ENCODE measurements at regions of chr11 and their contacts with region 1.

Region 1: DNA sequence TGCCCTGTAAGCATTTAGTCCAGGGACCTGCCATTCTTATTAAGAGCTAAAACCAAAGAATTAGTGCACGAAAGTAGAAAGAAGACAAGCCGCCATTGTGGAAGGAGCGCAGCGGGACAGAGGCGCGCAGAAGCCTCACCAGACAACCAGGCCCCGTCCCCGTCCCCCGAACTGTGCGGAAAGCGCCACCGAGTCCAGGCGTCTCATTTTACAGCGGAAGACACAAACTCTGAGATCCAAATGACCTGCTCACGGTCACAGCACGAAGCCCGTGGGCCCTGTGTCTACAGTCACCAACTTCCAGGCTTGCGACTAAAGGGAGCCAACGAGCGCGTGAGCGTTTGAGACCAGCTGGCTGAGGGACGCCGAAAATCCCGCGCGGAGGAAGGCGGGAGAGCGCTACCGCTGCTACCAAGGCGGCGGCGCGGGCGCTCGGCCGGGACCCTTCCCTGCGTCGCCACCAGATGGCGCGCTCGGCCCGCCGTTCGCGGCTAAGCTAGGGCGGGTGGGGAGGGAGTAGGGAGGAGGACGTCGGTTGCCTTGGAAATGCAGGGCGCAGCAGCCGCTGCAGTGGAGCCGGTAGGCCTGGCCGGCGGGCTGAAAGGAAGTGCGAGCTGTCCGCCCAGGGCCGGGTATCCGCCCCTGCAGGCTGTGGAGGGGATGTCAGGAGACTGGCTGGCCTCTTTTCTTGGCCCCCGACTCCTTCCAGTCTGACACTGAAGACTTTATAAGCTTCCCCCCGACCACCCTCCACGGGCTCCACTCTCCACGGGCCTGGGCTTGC is 434 bp upstream of the CCDC83 start:
- DNase-seq: peak; percentile 84
- ATAC-seq: peak; percentile 100
- H3K4me3 ChIP-seq: peak overlapping the region; percentile 63 to 85 (median 73)
- H3K27ac ChIP-seq: peak overlapping the region; percentile 72
- H3K4me1 ChIP-seq: peaks cover 10% of the 10 kb centered on the region
- H3K27me3 ChIP-seq: no peaks in the 10 kb centered on the region; a peak in 1 of 5 replicates
- CTCF ChIP-seq: peak; percentile 100
- EP300 ChIP-seq: no peak
- POLR2A ChIP-seq: peak; percentile 50 to 75; a peak in 2 of 4 replicates
- RAD21 ChIP-seq: peak; percentile 100

Region 2: DNA sequence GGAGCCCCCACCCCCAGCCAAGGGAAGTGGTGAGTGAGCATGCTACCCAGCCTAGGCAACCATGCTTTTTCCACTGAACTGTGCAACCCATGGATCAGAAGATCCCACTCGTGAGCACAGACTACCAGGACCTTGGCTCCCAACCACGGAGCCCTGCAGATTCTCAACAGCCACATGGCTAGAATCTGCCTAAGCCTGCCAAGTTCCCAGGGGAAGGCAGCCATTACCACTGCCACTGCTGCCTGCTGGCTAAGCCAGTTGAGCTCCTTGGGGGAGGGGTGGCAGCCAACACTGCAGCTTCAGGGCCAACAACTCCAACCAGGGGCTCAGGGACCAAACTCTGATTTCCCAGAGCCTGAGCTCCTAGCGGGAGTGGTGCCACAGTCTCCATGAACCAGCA is 423.4 kb before region 1 on chr11:
- CTCF ChIA-PET with region 1: no interaction called
- POLR2A ChIA-PET with region 1: no interaction called
- in situ Hi-C with region 1: no loop called
- intact Hi-C with region 1: no loop called
- DNase-seq: no peak
- ATAC-seq: no peak
- H3K4me3 ChIP-seq: no peak overlapping the region
- H3K27ac ChIP-seq: no peak overlapping the region
- H3K4me1 ChIP-seq: no peaks in the 10 kb centered on the region
- H3K27me3 ChIP-seq: no peaks in the 10 kb centered on the region
- CTCF ChIP-seq: no peak
- EP300 ChIP-seq: no peak
- POLR2A ChIP-seq: no peak
- RAD21 ChIP-seq: no peak

Region 3: DNA sequence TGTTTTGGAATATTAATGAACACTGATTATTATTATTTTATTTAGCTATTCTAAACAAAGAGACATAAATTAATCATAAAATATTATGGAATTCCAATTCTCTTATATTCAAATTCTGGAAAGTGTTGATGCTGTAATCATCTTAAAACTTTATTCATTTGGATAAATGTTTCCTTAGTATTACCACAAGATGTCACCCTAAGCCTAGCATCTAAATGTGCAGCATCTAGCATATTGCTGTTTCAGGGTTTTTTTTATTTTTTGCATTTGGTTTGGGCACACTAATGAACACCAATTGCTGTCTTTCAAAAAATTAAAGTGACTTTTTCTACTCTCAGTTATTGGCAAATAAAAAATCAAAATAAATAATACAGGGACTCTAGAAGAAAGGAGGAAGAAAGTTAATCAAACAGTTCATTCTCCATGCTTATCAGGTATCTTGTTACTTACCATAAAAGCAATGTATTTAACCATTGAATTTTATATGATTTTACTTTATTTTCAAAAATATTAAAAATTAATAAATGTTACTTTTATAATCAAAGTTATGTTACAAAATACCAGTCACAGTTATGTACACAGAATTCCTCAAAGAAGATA is 259.4 kb before region 1 on chr11:
- CTCF ChIA-PET with region 1: no interaction called
- POLR2A ChIA-PET with region 1: no interaction called
- in situ Hi-C with region 1: no loop called
- intact Hi-C with region 1: loop called (anchors 1 kb)
- DNase-seq: peak; percentile 38
- ATAC-seq: peak; percentile 38; the same call in 1 of the 3 replicates
- H3K4me3 ChIP-seq: no peak overlapping the region
- H3K27ac ChIP-seq: no peak overlapping the region
- H3K4me1 ChIP-seq: no peaks in the 10 kb centered on the region
- H3K27me3 ChIP-seq: no peaks in the 10 kb centered on the region
- CTCF ChIP-seq: peak; percentile 67
- EP300 ChIP-seq: no peak
- POLR2A ChIP-seq: no peak
- RAD21 ChIP-seq: peak; percentile 32; the same call in 1 of the 2 replicates

Region 4: DNA sequence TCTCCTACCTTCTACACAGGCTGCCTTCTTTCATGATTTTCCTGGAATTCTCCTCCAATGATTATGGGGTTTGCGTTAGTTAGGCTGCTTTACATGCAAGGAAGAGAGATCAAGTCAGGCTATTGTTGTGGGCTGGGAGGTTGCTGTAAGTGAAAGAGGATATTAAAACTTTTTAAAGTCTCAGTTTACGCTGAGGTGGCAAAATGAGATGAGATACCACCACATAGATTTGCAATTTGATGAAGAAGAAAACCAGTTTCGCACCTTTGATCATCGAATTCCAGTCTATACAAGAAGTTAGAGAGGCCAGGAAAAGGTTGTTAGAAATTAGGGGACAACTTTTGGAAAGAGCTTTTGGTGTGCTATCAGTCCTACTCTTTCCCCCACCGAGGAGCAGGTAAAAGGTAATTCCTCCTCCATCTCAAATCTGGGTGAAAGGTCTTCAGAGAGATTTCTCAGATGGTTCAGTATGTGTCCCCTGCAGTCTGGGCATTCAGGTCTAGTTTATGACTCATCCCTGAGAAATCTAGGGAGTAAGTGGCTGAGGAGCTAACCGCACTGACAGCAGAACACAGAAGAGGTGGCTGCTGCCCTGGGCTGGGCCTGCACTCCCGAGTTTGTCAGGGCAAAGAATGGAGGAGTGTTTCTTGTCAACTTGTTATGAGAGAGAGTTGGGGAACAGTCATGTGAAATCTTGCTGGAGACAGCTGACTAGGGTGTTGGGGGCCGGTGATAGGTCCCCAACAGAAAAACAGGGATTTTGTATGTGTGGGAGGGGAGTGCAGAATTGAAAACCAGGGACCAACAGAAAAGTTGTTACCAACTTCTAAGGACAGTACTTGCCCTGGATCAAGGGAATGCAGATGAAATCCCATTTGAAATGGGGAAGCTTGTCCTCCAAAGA is 35.2 kb after region 1 on chr11:
- CTCF ChIA-PET with region 1: no interaction called
- POLR2A ChIA-PET with region 1: no interaction called
- in situ Hi-C with region 1: no loop called
- intact Hi-C with region 1: no loop called
- DNase-seq: peak; percentile 13
- ATAC-seq: peak; percentile 70
- H3K4me3 ChIP-seq: no peak overlapping the region
- H3K27ac ChIP-seq: no peak overlapping the region
- H3K4me1 ChIP-seq: peaks cover 33% of the 10 kb centered on the region
- H3K27me3 ChIP-seq: no peaks in the 10 kb centered on the region
- CTCF ChIP-seq: no peak
- EP300 ChIP-seq: no peak
- POLR2A ChIP-seq: no peak
- RAD21 ChIP-seq: no peak

Region 5: DNA sequence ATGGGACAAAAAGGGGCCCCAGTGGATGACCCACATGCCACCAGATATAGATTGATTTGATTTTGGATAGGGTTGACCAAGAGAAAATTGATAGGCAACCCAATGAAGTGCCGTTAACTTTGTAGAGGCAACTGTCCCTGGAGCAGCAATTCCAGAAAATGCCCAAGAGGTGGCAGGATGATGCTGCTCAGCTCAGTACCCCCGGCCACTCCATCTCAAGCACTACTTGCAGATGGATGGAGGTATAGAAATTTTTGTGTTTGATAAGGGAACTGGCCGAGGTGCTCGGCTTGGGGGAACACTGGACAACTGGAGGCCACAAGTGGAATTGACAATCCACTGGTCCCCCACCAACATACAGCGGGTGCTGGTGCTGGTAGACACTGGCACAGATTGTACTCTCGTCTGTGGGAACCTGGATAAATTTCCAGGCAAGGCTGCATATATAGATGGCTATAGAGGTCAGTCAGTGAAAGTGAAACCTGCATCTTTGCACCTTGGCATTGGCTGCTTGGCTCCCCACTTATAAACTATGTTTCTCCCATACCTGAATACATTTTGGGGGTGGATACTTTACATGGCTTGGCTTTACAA is 86.7 kb after region 1 on chr11:
- CTCF ChIA-PET with region 1: no interaction called
- POLR2A ChIA-PET with region 1: no interaction called
- in situ Hi-C with region 1: no loop called
- intact Hi-C with region 1: loop called (anchors 2 kb)
- DNase-seq: peak; percentile 56
- ATAC-seq: peak; percentile 81
- H3K4me3 ChIP-seq: no peak overlapping the region
- H3K27ac ChIP-seq: no peak overlapping the region
- H3K4me1 ChIP-seq: peaks cover 31% of the 10 kb centered on the region
- H3K27me3 ChIP-seq: no peaks in the 10 kb centered on the region
- CTCF ChIP-seq: peak; percentile 77
- EP300 ChIP-seq: no peak
- POLR2A ChIP-seq: no peak
- RAD21 ChIP-seq: peak; percentile 72

Region 6: DNA sequence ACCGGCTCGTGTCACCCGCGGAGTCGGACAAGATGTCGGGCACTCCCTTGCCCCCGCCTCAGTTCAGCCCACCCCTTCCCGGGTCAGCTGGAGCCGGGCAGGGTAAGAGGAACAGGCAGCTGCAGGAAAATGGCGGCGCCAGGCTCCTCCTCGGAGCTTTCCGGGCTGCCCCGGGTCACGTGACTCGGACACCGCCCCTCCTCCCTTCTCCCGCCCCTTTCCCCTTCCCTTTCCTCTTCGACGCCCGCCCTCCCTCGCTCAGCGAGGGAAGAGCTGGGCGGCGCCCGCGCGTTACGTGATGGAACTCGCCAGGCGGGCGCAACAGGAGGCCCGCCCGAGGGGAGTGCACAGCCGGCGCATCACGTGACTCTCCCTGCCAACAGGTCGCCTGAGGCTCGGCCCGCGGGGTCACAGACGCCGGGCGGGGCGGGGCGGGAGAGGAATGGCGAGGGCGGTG is 214.2 kb after region 1 on chr11 and contains the start of gene PICALM:
- CTCF ChIA-PET with region 1: no interaction called
- POLR2A ChIA-PET with region 1: interaction called, 11 read pairs
- in situ Hi-C with region 1: no loop called
- intact Hi-C with region 1: no loop called
- DNase-seq: peak; percentile 96
- ATAC-seq: peak; percentile 92
- H3K4me3 ChIP-seq: peak within 1 kb of the TSS; percentile 83 to 99 (median 84)
- H3K27ac ChIP-seq: peak within 1 kb of the TSS; percentile 86
- H3K4me1 ChIP-seq: peaks cover 32% of the 10 kb centered on the region
- H3K27me3 ChIP-seq: peaks cover 0 to 5% of the 10 kb centered on the region in 2 experiments; a peak in 1 of 5 replicates
- CTCF ChIP-seq: peak; percentile 45
- EP300 ChIP-seq: peak in 1 of 2 experiments; percentile 73; a peak in 2 of 4 replicates
- POLR2A ChIP-seq: peak; percentile 65 to 81
- RAD21 ChIP-seq: peak; percentile 63
- total RNA-seq, gene PICALM: 97.6 and 122 TPM in 2 replicates

Region 7: DNA sequence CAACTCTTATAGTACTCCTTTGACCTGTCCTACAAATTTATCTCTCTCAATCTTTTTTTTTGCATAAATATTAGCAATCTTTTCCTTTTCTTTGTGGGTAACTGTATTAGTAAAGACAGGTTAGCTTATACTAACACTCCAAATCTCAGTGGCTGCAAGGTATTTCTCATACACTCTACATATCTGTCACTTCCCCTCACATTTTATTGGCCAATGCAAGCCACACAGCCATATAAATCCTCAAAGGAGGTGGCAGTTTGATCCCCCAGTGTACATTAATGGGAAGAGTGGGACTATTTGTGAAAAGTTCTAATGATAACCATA is 347.2 kb after region 1 on chr11:
- CTCF ChIA-PET with region 1: no interaction called
- POLR2A ChIA-PET with region 1: interaction called, 4 read pairs
- in situ Hi-C with region 1: loop called (anchors 10 kb)
- intact Hi-C with region 1: no loop called
- DNase-seq: no peak
- ATAC-seq: no peak
- H3K4me3 ChIP-seq: no peak overlapping the region
- H3K27ac ChIP-seq: no peak overlapping the region
- H3K4me1 ChIP-seq: peaks cover 14% of the 10 kb centered on the region
- H3K27me3 ChIP-seq: no peaks in the 10 kb centered on the region
- CTCF ChIP-seq: no peak
- EP300 ChIP-seq: no peak
- POLR2A ChIP-seq: no peak
- RAD21 ChIP-seq: no peak

Region 8: GRCh38 chr11:86291466-86292262 is 436.9 kb after region 1 on chr11:
- CTCF ChIA-PET with region 1: interaction called, 6 read pairs
- POLR2A ChIA-PET with region 1: interaction called, 4 read pairs
- in situ Hi-C with region 1: loop called (anchors 5 kb)
- intact Hi-C with region 1: loop called (anchors 2 kb)
- DNase-seq: peak; percentile 70
- ATAC-seq: peak; percentile 91
- H3K4me3 ChIP-seq: no peak overlapping the region
- H3K27ac ChIP-seq: no peak overlapping the region
- H3K4me1 ChIP-seq: peaks cover 16% of the 10 kb centered on the region
- H3K27me3 ChIP-seq: no peaks in the 10 kb centered on the region
- CTCF ChIP-seq: peak; percentile 63
- EP300 ChIP-seq: 0 out of 4 replicates have a peak, but pooled peaks of 1 of the 2 experiments have one; percentile 12
- POLR2A ChIP-seq: no peak
- RAD21 ChIP-seq: peak; percentile 16; the same call in 1 of the 2 replicates

Measured in HepG2 (cell line).